Pancreas (tissue), 10 donors: ENCODE measurements at regions of chr3 and their contacts with region 1.

Region 1: GRCh38 chr3:171172070-171172469 is 145.6 kb upstream of the SLC2A2 start:
- DNase-seq: no peak
- ATAC-seq: no peak
- H3K4me3 ChIP-seq: no peak overlapping the region
- H3K27ac ChIP-seq: peak overlapping the region in 1 of 4 donors; percentile 72
- H3K4me1 ChIP-seq: peaks cover 10 to 40% (median 14%) of the 10 kb centered on the region in 3 donors
- H3K27me3 ChIP-seq: no peaks in the 10 kb centered on the region
- CTCF ChIP-seq: peak in 1 of 4 donors; percentile 6

Region 2: DNA sequence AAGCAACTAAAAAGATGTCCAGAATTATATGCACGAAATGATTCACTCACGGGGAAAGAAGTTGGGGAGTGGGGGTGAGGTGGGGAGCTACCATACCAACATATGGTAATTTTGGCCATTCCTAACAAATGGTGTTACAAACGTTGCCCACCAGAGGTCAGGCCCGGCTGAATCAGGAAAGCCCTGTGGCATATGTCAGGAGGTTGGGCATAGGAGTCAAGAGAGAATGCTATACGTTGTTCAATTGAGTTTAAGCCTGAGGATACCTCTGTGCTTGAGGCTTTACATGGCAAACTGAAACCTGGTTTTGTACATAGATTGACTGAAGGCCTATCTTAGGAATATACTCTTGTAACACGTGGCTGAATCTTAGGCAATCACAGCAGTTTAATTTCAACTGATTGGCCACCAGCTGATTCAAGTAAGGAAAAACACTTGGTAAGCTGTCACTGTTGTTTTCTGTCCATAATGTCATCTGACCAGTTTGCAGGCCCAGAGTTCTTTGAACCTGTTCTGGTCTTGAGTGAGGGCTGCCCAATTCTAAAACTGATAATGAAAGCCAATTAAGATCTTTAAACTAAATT is 122.1 kb before region 1 on chr3:
- intact Hi-C with region 1: loop called in 1 of 3 experiments (anchors 10 kb)
- DNase-seq: peak; percentile 22 to 73 (median 60)
- ATAC-seq: peak; percentile 80 to 97 (median 91)
- H3K4me3 ChIP-seq: no peak overlapping the region
- H3K27ac ChIP-seq: no peak overlapping the region
- H3K4me1 ChIP-seq: peaks cover 0 to 2% (median 0%) of the 10 kb centered on the region in 3 donors
- H3K27me3 ChIP-seq: no peaks in the 10 kb centered on the region
- CTCF ChIP-seq: peak; percentile 22 to 44 (median 38)

Region 3: DNA sequence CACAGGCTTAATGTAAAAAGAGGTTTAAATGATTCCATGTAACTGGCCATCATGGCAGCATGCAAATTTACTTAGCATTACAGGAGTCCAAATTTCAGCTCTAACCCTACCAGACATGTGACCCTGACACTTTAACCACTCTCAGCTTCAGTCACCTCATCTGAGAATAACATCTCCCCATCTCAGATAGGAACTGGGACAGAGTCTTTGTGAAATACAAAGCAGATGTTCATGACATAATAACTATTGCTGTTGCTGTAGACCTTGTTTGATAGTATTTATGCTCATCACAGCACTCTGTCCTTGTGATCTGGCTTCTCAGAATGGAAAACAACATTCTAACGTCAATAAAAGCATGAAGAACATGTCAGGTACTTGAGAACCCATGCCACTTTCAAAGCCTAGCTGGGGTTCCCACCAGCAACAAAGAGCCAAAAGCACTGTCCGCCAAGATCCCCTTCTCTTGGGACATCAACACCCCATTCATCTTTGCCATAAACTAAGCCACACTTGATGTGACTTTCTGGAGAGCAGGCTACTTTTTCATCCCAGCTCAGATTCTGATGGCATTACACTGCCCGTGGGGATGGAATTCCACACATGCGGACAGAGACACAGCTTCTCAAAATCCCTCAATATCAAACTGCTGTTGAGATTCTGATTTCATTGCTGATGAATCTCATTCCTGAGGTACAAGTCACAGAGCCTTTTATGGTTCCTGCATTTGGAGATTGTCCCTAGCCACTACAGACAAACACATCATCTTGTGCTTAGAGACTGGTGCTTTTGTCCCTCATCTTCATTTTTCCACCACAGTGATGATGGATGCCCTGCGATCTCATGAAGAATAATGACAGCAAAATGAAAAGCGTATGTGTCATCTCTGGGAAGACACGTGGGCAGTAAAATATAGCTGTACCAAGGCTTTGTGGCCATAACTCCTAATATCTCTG is 85.5 kb after region 1 on chr3:
- intact Hi-C with region 1: no loop called
- DNase-seq: no peak
- ATAC-seq: no peak
- H3K4me3 ChIP-seq: no peak overlapping the region
- H3K27ac ChIP-seq: no peak overlapping the region
- H3K4me1 ChIP-seq: peaks cover 0 to 8% (median 0%) of the 10 kb centered on the region in 3 donors
- H3K27me3 ChIP-seq: no peaks in the 10 kb centered on the region
- CTCF ChIP-seq: no peak